ENCODE measurements at regions of chr19 and their contacts with region 1.

Region 1: GRCh38 chr19:54159352-54160181 is at the start of gene LENG1:
- DNase-seq: peak; percentile 98
- CTCF ChIP-seq: peak; percentile 15

Region 2: GRCh38 chr19:54096617-54097129 is 62.9 kb before region 1 on chr19:
- in situ Hi-C with region 1: no loop called
- DNase-seq: no peak
- CTCF ChIP-seq: peak; percentile 23

Region 3: DNA sequence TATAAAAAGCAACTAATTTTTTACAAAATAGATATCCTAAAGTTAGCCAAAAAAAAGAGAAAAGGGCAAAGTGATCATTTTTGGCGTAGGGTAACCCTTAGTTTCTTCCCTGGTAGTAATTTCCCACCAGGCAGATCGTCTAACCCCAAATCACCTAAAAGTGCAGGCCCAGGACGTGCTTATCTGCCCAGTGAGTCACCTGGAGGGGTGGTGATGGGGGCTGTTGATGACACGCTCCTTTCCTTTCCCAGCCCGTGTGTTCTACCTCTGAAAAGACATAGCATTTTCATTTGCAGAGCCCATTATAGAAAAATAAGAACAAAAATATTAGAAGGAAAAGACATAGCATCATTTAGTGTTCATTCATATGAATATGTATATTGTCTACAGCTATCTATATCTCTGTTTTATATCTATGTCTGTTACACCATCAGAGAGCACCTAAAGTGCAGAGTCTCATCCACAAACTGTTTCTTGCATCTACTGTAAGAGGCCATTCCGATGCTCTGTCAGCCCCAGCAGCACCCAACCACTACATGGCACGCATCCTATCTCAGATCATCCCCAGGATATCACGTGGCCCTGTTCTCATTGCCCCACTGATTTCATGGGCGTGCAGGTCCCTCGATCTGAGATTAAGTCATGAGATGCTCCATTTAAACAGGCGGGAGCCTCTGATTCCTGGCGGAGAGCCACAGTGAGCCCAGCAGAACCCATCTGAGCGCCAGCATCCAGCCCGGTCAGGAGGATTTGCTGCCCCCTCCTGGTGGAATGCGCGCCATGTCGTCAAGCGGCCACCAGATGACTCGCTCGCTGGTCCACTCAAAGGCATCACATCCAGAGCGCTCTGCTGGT is 71.7 kb after region 1 on chr19:
- in situ Hi-C with region 1: loop called (anchors 10 kb)
- DNase-seq: peak; percentile 84
- CTCF ChIP-seq: peak; percentile 95

Region 4: DNA sequence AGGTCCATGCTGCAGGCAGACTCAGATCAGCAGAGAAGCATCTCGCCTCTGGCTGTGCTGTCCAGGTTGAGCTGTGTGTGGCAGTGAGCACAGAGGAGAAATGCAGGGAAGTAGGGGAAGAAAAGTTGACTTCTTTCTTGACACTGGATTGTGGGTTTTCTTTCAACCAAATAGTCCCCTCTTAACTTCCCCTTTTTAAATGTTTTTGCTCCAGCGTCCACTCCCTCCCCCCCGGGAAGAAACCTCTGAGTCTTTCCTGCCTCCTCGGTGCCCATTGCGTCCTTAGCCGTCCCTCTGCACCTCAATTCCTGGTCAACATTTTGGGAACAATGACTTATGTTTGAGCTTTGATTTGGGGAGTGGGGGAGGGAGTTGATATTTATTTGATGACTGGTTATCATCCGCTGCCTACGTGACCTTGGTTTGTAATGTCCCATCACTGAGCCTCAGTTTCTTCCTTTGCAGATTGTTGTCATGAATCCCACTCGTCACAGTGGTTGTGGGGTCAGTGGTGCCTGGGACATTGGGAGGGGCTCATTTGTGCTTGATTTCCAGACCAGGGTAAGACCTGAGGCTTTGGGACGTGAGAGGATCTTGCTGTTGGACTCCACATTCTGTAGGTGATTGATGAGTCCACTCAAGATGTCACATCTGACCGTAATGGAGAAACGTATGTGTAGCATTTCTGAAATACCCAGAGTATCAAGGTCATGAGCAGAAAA is 121.6 kb after region 1 on chr19 and contains the start of gene LILRB2:
- in situ Hi-C with region 1: no loop called
- DNase-seq: no peak
- CTCF ChIP-seq: no peak